SK-MEL-5 (cell line): ENCODE measurements at regions of chr3 and their contacts with region 1.

Region 1: DNA sequence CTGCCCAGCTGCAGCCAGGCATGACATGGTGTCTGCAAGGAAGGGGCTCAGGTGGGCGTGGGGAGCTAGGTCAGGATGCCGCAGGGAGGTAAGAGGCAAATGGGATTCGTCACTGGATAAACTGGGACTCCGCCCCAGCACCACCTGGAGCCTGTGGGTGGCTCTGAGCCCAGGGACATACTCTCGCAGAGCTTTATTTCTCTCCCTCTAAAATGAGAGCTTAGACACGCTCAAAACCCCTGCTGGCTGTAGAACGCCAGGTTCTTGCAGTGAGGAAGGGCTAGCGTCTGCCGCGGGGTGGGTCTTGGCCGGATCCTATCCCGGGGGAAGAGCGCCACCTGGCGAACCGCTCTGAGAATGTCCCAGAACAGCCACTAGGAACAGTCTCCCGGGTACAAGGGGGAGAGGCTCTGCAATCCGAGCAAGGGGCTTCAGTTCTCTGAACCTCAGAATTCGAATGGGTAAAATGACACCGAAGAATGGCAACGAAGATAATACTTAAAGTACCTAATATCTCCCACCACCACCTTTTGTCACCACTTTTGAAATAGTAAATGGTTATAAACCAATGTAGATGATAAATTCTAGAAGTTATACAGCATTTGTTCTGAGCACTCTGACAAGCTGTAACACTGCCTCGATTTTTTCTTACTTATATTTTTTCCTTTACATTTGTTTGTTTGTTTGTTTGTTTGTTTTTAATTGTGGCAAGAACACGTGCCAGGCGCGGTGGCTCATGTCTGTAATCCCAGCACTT is 53.2 kb upstream of the SRGAP3 start:
- DNase-seq: peak; percentile 78

Region 2: DNA sequence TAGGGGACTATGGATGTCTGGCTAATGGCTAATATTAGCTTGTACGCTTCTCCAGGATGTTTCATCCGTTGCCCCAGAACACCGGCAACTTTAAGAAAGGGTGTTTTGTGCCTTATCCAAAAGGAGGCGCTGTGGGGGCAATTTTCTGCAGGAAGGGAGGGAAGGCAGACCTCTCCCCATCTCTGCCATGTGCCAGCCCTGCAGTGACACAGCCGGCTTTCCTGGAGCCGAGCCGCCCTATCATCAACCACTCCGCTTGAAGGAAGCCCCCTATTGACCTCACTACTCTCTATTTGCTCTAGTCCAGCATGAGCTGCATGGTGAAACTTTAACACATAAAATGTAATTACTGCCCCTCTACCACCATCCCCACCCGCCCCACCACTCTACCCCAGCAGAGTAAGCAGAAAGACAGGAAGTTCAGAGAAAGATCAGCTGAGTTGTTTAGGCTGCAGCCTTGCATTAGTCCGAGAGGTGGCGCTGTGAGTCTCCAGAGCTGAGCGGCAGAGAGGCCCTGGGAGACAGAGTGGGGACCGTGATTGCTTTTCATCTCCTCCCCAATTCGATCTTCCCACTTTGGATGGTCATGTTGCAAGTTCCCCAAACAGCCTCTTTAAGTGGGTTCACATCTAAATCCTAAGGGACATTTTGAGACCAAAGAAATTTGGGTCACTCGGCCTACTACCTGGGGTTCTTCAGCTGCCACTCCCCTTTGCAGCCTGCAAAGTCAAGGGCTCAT is 314.8 kb before region 1 on chr3:
- in situ Hi-C with region 1: loop called (anchors 25 kb)
- DNase-seq: peak; percentile 84